CD4-positive, alpha-beta memory T cell (primary cell): ENCODE measurements at regions of chr7 and their contacts with region 1.

Region 1: DNA sequence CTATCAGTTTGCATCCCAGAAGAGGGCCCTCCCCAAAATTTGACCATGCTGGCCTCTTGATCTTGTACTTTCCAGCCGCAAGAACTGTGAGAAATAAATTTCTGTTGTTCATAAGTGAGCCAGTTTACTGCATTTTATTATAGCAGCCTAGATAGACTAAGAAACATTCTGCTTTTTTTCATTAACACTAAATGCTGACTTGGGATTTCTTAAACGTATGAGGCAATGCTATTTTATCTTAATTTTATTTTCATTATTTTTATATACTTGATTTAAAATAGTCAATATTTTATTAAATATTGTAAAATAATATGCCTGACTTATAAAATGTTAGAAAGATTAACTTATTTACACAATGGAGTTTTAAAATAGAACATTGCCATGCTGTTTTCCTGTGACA is 341.8 kb upstream of the CNTNAP2 start:
- DNase-seq: no peak
- H3K4me3 ChIP-seq: no peak overlapping the region
- H3K4me3 Mint-ChIP-seq: no peak overlapping the region
- H3K27ac ChIP-seq: no peak overlapping the region
- H3K27ac Mint-ChIP-seq: no peak overlapping the region
- H3K4me1 ChIP-seq: no peaks in the 10 kb centered on the region
- H3K4me1 Mint-ChIP-seq: no peaks in the 10 kb centered on the region
- H3K27me3 ChIP-seq: no peaks in the 10 kb centered on the region
- H3K27me3 Mint-ChIP-seq: no peaks in the 10 kb centered on the region

Region 2: GRCh38 chr7:145812218-145812617 is 37.4 kb after region 1 on chr7:
- CTCF ChIA-PET with region 1: no interaction called
- POLR2A ChIA-PET with region 1: no interaction called
- intact Hi-C with region 1: loop called (anchors 1 kb)
- DNase-seq: no peak
- H3K4me3 ChIP-seq: no peak overlapping the region
- H3K4me3 Mint-ChIP-seq: no peak overlapping the region
- H3K27ac ChIP-seq: no peak overlapping the region
- H3K27ac Mint-ChIP-seq: no peak overlapping the region
- H3K4me1 ChIP-seq: no peaks in the 10 kb centered on the region
- H3K4me1 Mint-ChIP-seq: no peaks in the 10 kb centered on the region
- H3K27me3 ChIP-seq: no peaks in the 10 kb centered on the region
- H3K27me3 Mint-ChIP-seq: no peaks in the 10 kb centered on the region